ENCODE measurements at regions of chr6 and their contacts with region 1.

Region 1: DNA sequence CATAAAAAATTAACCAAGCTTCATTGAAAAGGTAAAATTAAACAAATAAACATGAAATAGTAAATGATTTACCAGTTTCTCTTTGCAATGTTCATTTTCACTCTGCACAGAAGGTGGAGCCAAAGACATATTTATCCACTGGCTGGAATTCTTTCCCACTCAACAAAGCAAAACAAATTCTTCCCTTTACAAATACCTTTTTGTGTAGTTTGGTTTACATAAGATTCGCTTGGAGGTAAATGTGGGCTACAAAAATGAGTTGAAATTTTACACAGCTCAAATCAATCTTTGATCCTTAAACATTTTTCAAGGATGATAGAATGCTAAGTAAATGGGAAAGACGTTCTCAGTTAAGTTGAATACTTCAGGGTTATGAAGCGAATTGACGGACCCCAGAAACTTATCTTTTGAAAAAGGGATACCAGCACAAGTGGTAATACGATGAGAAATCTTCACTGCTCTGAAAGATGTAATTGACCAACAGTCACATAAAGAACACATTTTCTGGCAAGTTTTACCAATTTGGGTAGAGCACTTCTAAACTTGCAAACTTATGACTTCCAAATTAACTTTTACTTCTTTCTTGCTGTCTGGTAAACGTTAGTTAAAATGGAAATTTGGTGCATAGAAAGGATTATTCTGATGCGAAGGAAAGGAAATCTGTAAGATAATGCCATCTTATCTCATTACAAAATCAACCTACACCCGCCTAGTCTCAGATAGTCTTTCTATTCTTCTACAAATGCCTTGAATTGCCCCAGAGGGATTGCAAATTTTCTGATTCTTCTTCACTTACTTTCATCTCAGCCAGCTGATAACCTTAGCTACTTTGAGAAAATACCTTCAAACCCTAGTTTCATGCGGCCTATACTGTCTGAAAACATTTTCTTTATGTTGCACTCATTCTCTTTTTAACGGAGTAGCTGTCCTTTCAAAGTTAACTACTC is 4.7 kb upstream of the GJA1 start:
- DNase-seq: no peak
- H3K4me3 ChIP-seq: no peak overlapping the region
- H3K27ac ChIP-seq: peak overlapping the region in 1 of 2 donors; percentile 3
- H3K4me1 ChIP-seq: no peaks in the 10 kb centered on the region
- H3K27me3 ChIP-seq: no peaks in the 10 kb centered on the region
- CTCF ChIP-seq: peak; percentile 54 to 84 (median 72)
- EP300 ChIP-seq: no peak
- POLR2A ChIP-seq: no peak

Region 2: DNA sequence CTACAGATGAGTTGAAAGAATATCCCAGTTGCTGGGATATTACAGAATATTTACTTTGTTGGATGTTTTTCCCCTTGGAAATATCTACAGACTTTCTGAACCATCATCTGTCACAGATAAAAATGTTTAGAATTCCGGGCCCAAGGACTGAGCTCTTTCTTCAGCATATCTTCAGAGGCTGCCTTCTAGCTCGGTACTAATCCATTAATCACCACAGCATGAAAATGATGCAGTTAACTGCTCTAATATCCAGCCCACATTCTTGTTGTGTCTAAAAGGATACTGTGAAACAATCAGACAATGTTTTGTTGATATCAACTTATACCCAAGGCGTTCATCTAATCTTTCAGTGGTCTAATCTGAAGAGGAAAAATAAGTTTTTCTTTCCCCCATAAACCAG is 343.9 kb before region 1 on chr6:
- intact Hi-C with region 1: no loop called
- DNase-seq: no peak
- H3K4me3 ChIP-seq: no peak overlapping the region
- H3K27ac ChIP-seq: no peak overlapping the region
- H3K4me1 ChIP-seq: no peaks in the 10 kb centered on the region
- H3K27me3 ChIP-seq: no peaks in the 10 kb centered on the region
- CTCF ChIP-seq: no peak
- EP300 ChIP-seq: no peak
- POLR2A ChIP-seq: no peak

Region 3: GRCh38 chr6:121382467-121383121 is 48.2 kb before region 1 on chr6:
- intact Hi-C with region 1: no loop called
- DNase-seq: no peak
- H3K4me3 ChIP-seq: no peak overlapping the region
- H3K27ac ChIP-seq: no peak overlapping the region
- H3K4me1 ChIP-seq: no peaks in the 10 kb centered on the region
- H3K27me3 ChIP-seq: no peaks in the 10 kb centered on the region
- CTCF ChIP-seq: no peak
- EP300 ChIP-seq: no peak
- POLR2A ChIP-seq: no peak

Region 4: DNA sequence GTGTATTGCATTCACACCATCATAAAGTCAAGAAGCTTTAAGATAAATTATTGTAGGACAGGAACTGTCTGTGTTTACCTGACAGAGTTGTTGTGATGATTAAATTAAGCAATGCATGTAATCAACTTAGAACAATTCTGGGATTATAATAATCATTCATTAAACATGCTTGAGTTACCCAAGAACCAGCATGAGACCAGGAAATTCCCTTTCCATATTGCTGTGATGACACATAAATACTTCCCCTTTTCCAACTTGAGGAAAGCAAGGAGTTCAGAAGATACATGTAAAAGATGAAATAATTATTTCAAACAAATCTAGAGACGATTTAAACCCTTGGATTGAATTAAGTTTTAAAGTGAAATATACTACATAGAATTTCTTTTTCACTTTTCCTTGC is 409.1 kb after region 1 on chr6:
- intact Hi-C with region 1: loop called in 2 of 4 experiments (anchors 5 to 10 kb)
- DNase-seq: no peak
- H3K4me3 ChIP-seq: no peak overlapping the region
- H3K27ac ChIP-seq: no peak overlapping the region
- H3K4me1 ChIP-seq: no peaks in the 10 kb centered on the region
- H3K27me3 ChIP-seq: no peaks in the 10 kb centered on the region
- CTCF ChIP-seq: no peak
- EP300 ChIP-seq: no peak
- POLR2A ChIP-seq: no peak

Region 5: GRCh38 chr6:121849477-121849876 is 418.7 kb after region 1 on chr6:
- intact Hi-C with region 1: loop called in 3 of 4 experiments (anchors 5 to 10 kb)
- DNase-seq: peak in 4 of 5 donors; percentile 32 to 75 (median 46)
- H3K4me3 ChIP-seq: no peak overlapping the region
- H3K27ac ChIP-seq: no peak overlapping the region
- H3K4me1 ChIP-seq: no peaks in the 10 kb centered on the region
- H3K27me3 ChIP-seq: no peaks in the 10 kb centered on the region
- CTCF ChIP-seq: peak in 2 of 3 donors; percentile 46 to 75
- EP300 ChIP-seq: no peak
- POLR2A ChIP-seq: no peak

Region 6: DNA sequence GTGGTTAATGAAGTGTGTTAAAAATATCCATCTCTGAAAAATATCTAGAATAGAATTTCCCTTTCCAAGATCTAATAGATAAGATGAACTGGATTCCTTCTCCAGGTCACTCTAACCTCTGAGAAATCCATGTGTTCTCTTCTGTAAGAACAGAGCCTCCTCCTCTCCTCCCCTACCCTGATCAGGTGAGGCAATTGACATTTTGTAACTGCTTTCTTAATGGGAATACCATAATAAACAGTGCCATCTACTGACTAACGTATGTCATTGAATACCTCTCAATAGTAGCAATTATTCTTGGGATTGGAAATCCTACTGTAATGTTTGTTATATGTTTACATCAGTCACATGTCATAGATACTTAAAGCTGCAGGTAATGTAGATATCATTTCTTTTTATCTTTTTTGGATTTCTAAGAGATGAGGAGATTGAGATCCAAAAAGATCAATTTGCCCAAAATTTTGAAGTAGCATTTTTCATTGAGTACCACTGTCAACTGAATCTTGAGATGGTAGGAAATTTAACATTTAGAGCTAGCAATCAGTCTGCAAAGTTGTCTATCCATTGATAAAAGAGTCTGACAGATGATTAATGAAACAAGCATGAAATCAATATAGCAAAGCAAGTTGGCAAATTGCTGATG is 602.9 kb after region 1 on chr6:
- intact Hi-C with region 1: loop called (anchors 5 to 10 kb)
- DNase-seq: no peak
- H3K4me3 ChIP-seq: no peak overlapping the region
- H3K27ac ChIP-seq: no peak overlapping the region
- H3K4me1 ChIP-seq: no peaks in the 10 kb centered on the region
- H3K27me3 ChIP-seq: no peaks in the 10 kb centered on the region
- CTCF ChIP-seq: peak; percentile 50 to 52 (median 50)
- EP300 ChIP-seq: no peak
- POLR2A ChIP-seq: no peak

Region 7: DNA sequence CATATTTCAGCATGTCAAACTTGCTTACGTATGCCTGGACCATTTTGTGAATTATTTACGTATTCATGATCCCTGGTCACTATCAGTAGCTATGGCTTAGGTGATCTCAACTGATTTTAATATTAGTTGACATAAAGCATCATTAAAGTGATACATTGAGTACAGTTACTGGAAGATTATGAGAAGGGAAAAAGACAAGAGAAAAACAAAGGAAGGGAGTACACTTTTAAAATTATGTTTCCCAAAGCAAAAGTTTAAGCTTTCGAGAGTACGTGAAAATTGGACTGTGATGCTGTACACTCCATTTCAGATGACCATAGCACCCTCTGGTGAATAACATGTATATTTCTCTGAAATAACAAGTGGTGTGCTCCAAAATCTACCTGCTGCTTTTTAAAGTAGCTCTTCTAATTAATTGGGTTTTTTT is 753.6 kb after region 1 on chr6:
- intact Hi-C with region 1: loop called in 2 of 4 experiments (anchors 2 to 10 kb)
- DNase-seq: no peak
- H3K4me3 ChIP-seq: no peak overlapping the region
- H3K27ac ChIP-seq: no peak overlapping the region
- H3K4me1 ChIP-seq: no peaks in the 10 kb centered on the region
- H3K27me3 ChIP-seq: no peaks in the 10 kb centered on the region
- CTCF ChIP-seq: peak in 2 of 3 donors; percentile 53 to 56
- EP300 ChIP-seq: no peak
- POLR2A ChIP-seq: no peak

Region 8: GRCh38 chr6:122198922-122199321 is 768.1 kb after region 1 on chr6:
- intact Hi-C with region 1: loop called in 1 of 4 experiments (anchors 5 kb)
- DNase-seq: no peak
- H3K4me3 ChIP-seq: no peak overlapping the region
- H3K27ac ChIP-seq: no peak overlapping the region
- H3K4me1 ChIP-seq: no peaks in the 10 kb centered on the region
- H3K27me3 ChIP-seq: no peaks in the 10 kb centered on the region
- CTCF ChIP-seq: no peak
- EP300 ChIP-seq: no peak
- POLR2A ChIP-seq: no peak

Measured in ovary (tissue), 10 donors.